ENCODE measurements at regions of chr7 and their contacts with region 1.

Region 1: DNA sequence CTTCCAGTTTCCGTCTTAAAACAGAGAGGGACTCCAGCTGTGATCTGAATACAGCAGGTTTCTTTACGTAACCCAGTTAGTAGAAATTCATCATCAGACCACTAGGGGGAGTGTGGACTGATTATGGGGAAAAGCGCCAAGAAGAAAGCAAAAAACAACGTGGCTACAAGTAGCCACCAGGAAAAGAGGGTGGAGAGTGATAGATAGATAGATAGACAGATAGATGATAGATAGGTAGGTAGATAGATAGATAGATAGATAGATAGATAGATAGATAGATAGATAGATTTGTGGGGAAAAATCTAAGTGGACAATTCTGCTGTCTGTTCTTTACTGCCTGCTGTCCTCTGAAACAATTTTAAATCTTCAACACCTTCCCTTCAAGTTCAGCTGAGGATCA is 12.7 kb upstream of the AKR1B10 start:
- DNase-seq: peak; percentile 31
- H3K4me3 ChIP-seq: no peak overlapping the region
- CTCF ChIP-seq: peak; percentile 69

Region 2: GRCh38 chr7:133434055-133434865 is 1080.4 kb before region 1 on chr7:
- CTCF ChIA-PET with region 1: no interaction called
- POLR2A ChIA-PET with region 1: no interaction called
- DNase-seq: no peak
- H3K4me3 ChIP-seq: no peak overlapping the region
- CTCF ChIP-seq: peak; percentile 42

Region 3: DNA sequence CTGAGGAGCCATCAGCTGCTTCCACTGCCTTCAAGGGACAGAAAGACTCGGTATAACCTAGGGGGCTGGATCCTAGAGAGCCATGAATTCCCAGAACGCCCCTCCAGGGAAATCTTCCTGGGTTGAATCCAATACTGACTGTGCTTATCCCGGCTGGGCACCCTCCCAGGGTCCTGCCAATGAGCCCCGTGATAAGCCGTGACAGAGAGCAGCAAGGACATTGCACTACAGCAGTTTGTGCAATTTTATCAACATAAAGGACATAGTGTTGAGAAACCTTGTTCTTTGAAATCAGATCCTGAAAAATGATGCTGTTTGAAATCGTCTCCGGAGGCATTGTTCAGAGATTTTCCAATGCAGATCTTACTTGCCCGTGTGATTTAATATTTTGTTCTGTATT is 74.6 kb before region 1 on chr7:
- CTCF ChIA-PET with region 1: interaction called, 43 read pairs
- POLR2A ChIA-PET with region 1: no interaction called
- DNase-seq: no peak
- H3K4me3 ChIP-seq: no peak overlapping the region
- CTCF ChIP-seq: no peak

Region 4: GRCh38 chr7:134480736-134481135 is 33.9 kb before region 1 on chr7:
- CTCF ChIA-PET with region 1: interaction called, 100 read pairs
- POLR2A ChIA-PET with region 1: no interaction called
- DNase-seq: no peak
- H3K4me3 ChIP-seq: no peak overlapping the region
- CTCF ChIP-seq: no peak

Region 5: GRCh38 chr7:134527979-134528371 is 13.3 kb after region 1 on chr7:
- CTCF ChIA-PET with region 1: interaction called, 20 read pairs
- POLR2A ChIA-PET with region 1: no interaction called
- DNase-seq: peak; percentile 64
- H3K4me3 ChIP-seq: peak overlapping the region; percentile 33; the same call in 1 of the 2 replicates
- CTCF ChIP-seq: no peak

Region 6: DNA sequence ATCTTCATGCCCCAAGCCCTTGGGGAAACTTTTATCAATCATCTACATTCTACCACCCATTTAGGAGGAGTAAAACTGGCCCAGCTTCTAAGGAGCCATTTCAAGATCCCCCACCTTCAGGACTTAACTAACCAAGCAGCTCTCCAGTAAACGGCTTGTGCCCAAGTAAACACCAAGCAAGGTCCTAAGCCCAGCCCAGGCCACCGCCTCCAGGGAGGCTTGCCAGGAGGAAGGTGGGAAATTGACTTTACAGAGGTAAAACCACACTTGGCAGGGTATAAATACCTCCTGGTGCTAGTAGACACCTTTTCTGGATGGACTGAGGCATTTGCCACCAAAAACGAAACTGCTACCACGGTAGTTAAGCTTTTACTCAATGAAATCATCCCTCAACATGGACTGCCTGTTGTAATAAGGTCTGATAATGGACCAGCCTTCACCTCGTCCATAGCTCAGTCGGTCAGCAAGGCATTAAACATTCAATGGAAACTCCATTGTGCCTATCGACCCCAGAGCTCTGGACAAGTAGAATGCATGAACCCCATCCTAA is 39.8 kb after region 1 on chr7:
- CTCF ChIA-PET with region 1: interaction called, 14 read pairs
- POLR2A ChIA-PET with region 1: no interaction called
- DNase-seq: no peak
- H3K4me3 ChIP-seq: no peak overlapping the region
- CTCF ChIP-seq: no peak

Measured in AG04449 (cell line).